Heart right ventricle (tissue), 16 donors: ENCODE measurements at regions of chr5 and their contacts with region 1.

Region 1: GRCh38 chr5:141338538-141339306 is at the start of gene PCDHGA2:
- DNase-seq: peak in 1 of 2 donors; percentile 36
- ATAC-seq: peak; percentile 47 to 81 (median 71)
- H3K4me3 ChIP-seq: peak within 1 kb of the TSS; percentile 5 to 60 (median 46)
- H3K27ac ChIP-seq: peak within 1 kb of the TSS in 9 of 10 donors; percentile 16 to 82 (median 67)
- H3K4me1 ChIP-seq: peaks cover 0 to 4% (median 0%) of the 10 kb centered on the region in 9 donors
- H3K27me3 ChIP-seq: peaks cover 0 to 61% (median 0%) of the 10 kb centered on the region in 7 donors
- CTCF ChIP-seq: peak; percentile 42 to 70 (median 57)
- total RNA-seq, gene PCDHGA2: 7.0 to 15.3 (median 12.2) TPM

Region 2: GRCh38 chr5:141369994-141370848 is 31.5 kb after region 1 on chr5 and contains the start of gene PCDHGB3:
- intact Hi-C with region 1: loop called in 1 of 10 experiments (anchors 2 kb)
- DNase-seq: no peak
- ATAC-seq: peak; percentile 80 to 94 (median 88)
- H3K4me3 ChIP-seq: peak within 1 kb of the TSS in 7 of 10 donors; percentile 6 to 43 (median 37)
- H3K27ac ChIP-seq: peak within 1 kb of the TSS in 4 of 10 donors; percentile 21 to 57 (median 44)
- H3K4me1 ChIP-seq: peaks cover 0 to 39% (median 0%) of the 10 kb centered on the region in 9 donors
- H3K27me3 ChIP-seq: peaks cover 0 to 81% (median 0%) of the 10 kb centered on the region in 7 donors
- CTCF ChIP-seq: peak in 7 of 9 donors; percentile 31 to 62 (median 43)
- total RNA-seq, gene PCDHGB3: 7.0 to 14.0 (median 9.3) TPM

Region 3: GRCh38 chr5:141420855-141421496 is 82.3 kb after region 1 on chr5 and contains the start of gene PCDHGA11:
- intact Hi-C with region 1: loop called in 1 of 10 experiments (anchors 5 kb)
- DNase-seq: no peak
- ATAC-seq: peak in 4 of 8 donors; percentile 34 to 60 (median 42)
- H3K4me3 ChIP-seq: peak within 1 kb of the TSS in 9 of 10 donors; percentile 6 to 42 (median 34)
- H3K27ac ChIP-seq: no peak within 1 kb of the TSS
- H3K4me1 ChIP-seq: peaks cover 0 to 25% (median 6%) of the 10 kb centered on the region in 9 donors
- H3K27me3 ChIP-seq: peaks cover 0 to 99% (median 0%) of the 10 kb centered on the region in 7 donors
- CTCF ChIP-seq: peak; percentile 23 to 60 (median 49)
- total RNA-seq, gene PCDHGA11: 3.3 to 8.5 (median 5.4) TPM